Right ventricle myocardium inferior (tissue), 1 donor: ENCODE measurements at regions of chr9 and their contacts with region 1.

Region 1: DNA sequence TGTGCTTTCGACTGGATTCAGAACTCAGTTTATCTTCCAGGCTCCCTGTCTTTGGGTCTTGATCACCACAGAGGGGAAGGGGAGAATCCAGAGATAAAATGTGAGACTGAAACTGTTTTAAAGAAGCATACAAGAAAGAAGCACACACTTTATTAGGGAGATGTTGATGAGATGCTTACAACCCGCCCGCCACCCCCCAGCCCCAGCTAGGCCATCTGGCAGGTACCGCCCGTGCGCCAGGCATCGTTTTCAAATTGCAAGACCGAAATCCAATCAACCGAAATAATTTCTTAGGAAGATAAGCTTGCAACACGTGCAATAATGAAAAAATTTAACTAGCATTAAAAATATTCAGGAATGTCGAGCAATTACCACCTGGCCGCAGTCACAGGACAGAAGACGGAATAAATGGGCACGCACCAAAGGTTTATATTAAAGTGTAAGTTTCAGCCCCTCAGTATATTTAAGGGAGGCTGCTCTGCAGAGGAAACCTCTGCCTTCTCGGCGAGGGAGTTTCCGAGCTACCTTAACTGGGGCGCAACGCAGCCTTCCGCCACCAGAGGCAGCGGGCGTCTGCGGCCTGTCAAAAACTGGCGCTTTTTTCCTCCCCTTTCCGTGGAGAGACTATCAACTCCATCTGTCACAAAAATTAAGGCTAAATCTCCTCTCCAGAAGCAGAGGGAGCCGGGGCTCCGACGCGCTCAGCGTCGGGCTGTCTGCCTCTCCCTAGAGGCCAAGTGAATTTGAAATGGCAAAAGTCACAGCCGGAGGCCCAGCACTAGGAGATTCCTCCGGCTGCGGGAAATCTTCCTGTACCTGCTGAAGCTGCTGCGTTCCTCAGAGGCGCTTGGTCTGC is 996 bp upstream of the GAS1 start:
- DNase-seq: peak; percentile 89
- ATAC-seq: peak; percentile 69

Region 2: GRCh38 chr9:86486891-86487837 is 461.1 kb before region 1 on chr9:
- intact Hi-C with region 1: loop called (anchors 10 kb)
- DNase-seq: no peak
- ATAC-seq: peak; percentile 79

Region 3: GRCh38 chr9:86732514-86733171 is 215.7 kb before region 1 on chr9:
- intact Hi-C with region 1: loop called (anchors 10 kb)
- DNase-seq: no peak
- ATAC-seq: peak; percentile 88

Region 4: DNA sequence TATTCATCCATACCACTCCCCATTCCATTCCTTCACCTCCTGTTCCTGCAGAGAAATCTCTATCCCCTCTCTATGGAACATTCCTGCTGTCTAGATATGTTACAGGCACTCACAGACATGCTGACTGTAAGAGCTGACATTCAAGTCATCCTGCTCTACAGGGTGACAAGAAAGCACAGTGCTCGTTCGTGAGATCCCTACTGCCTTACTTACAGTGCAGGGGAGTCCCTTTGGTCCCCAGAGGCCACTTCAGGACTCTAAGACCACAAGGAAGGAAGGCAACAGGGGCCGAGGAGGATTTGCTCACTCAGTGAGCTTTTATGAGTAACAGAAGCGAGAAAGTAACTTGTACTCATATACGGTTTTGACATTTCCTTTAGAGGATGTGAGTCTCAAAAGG is 111.5 kb before region 1 on chr9:
- intact Hi-C with region 1: loop called (anchors 5 kb)
- DNase-seq: no peak
- ATAC-seq: no peak

Region 5: DNA sequence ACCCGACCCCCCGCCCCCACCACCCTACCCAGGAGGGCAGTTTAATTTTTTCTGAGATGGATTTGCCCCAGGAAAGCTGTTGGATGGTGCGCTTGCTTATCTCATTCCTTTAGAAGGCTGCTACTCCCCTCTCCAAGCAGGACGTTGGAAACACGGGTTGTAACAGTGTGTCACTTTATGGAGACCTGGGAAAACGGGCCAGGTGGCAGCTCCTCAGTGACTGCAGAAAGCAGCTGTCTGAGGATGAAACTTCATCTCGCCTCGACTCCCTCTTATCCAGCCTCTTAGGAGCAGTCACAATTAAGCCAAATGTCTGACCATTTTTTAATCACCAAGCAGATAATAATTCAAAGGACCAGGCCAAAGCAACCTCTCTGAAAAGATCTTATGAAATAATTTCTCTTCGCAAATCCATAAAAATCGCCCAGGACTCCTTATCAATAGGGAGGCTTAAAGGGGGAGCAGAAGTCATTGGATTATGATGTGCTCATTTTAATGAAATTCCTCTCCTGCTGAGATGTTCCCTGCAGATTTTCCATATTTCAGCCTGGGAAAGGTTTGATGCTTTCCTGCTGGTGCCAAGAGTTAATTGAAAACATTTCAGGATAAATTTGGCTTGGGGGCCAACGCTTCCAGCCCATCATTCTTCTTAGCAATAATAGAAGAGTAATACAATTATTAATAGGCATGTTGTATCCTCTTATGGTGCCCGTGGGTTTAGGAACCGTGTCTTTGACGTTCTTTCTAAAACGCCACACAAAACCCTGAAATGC is 27.0 kb before region 1 on chr9:
- intact Hi-C with region 1: no loop called
- DNase-seq: no peak
- ATAC-seq: peak; percentile 20

Region 6: DNA sequence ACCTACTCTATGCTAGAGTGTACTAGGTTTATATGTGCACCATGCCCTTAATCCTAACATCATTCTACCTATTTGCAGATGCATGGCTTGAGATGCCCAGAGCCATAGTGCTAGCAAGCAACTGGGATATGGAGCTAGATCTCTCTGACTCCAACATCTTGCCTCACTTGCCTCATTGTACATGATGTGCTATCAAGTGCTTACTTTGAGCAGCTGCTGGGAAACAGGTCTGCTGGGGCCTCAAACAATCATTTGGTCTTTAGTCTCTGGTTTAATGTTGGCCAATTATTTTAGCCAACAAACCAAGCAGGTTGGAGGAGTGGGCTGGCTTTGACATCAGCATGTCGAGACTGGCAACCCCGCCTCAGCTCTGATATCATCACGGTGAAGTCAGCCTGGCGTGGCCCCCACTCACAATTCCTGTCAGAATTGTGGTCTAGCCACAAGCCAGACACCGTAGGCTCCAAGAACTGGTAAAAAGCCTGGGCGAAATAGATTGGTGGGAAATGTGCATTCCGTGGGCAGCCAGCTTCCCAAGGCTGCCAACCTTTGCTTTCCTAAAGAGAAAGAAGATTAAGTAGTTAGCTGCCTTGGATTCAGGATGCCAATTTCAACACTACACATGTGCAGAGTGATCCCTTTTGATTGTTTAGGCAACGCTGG is 20.1 kb after region 1 on chr9:
- intact Hi-C with region 1: no loop called
- DNase-seq: no peak
- ATAC-seq: no peak

Region 7: GRCh38 chr9:86997158-86997557 is 48.9 kb after region 1 on chr9:
- intact Hi-C with region 1: no loop called
- DNase-seq: no peak
- ATAC-seq: no peak

Region 8: GRCh38 chr9:87035879-87036278 is 87.6 kb after region 1 on chr9:
- intact Hi-C with region 1: no loop called
- DNase-seq: no peak
- ATAC-seq: peak; percentile 44

Region 9: GRCh38 chr9:87148331-87149104 is 200.2 kb after region 1 on chr9:
- intact Hi-C with region 1: loop called (anchors 2 kb)
- DNase-seq: peak; percentile 92
- ATAC-seq: peak; percentile 93

Region 10: GRCh38 chr9:87324613-87325194 is 376.4 kb after region 1 on chr9:
- intact Hi-C with region 1: loop called (anchors 5 kb)
- DNase-seq: no peak
- ATAC-seq: peak; percentile 78